ENCODE measurements at regions of chr12 and their contacts with region 1.

Region 1: DNA sequence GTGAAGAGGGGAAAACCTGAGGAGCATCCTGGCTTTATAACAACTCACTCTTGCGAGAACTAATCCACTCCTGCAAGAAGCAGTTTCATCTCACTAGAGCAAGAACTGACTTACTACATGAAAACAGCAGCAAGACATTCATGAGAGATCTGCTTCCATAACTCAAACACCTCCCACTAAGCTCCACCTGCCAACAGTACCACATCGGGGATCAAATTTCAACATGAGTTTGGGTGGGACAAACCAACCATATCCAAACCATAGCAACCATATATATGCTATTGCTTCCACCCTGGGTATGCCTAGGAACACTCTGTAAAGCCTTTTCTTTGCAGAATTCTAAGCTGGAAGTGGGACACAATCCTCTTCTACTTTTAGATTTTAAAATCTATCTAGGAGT is 13.9 kb upstream of the AVPR1A start:
- DNase-seq: no peak
- H3K4me3 ChIP-seq: no peak overlapping the region
- H3K27ac ChIP-seq: no peak overlapping the region
- H3K27me3 ChIP-seq: no peaks in the 10 kb centered on the region
- CTCF ChIP-seq: no peak

Region 2: DNA sequence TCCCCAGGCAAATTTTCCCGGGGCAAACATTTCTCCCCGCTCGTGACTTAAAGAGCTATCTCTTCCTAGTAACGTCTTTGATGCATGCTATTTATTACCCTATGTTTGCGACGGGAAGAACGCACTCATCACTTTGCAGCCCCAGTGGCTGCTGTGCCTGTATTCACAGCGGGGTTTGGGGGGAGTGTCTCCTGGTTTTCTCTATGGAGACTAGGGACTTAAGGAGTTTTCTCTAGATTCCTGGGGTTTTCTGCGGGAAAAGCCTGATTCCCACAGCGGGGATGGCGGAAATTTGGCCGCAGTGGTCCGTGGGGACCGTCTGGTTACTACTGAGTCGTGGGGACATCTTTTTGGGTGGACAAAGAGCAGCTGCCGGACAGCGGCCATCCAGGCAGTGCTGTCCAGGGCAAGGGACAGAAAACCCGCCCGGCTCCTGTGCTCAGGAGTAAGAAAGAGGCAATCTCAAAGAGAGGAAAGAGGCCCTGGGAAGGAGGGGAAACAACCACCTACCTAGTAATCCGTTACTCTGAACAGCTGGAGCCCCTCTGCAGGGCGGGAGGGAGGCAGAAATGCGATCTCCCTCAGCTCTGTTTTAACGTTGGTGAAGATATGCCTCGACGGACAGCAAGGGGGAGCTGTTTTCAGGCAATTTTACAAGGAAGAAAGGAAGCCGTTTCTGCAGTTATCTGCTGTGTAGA is 13.1 kb before region 1 on chr12:
- CTCF ChIA-PET with region 1: interaction called, 16 read pairs
- POLR2A ChIA-PET with region 1: no interaction called
- DNase-seq: peak; percentile 3
- H3K4me3 ChIP-seq: no peak overlapping the region
- H3K27ac ChIP-seq: no peak overlapping the region
- H3K27me3 ChIP-seq: peaks cover 25% of the 10 kb centered on the region
- CTCF ChIP-seq: peak; percentile 83

Region 3: GRCh38 chr12:63179224-63179623 is 14.3 kb after region 1 on chr12:
- CTCF ChIA-PET with region 1: no interaction called
- POLR2A ChIA-PET with region 1: no interaction called
- DNase-seq: no peak
- H3K4me3 ChIP-seq: no peak overlapping the region
- H3K27ac ChIP-seq: no peak overlapping the region
- H3K27me3 ChIP-seq: no peaks in the 10 kb centered on the region
- CTCF ChIP-seq: no peak

Region 4: DNA sequence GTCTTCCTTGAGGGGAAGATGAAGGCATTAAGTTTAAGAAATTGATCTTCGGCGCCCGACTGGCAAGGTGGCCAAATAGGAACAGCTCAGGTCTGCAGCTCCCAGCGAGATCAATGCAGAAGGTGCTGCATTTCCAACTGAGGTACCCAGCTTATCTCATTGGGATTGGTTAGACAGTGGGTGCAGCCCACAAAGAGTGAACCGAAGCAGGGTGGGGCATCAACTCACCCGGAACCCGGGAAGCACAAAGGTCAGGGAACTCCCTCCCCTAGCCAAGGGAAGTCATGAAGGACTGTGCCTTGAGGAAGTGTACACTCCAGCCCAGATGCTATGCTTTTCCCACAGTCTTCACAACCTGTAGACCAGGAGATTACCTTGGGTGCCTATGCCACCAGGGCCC is 31.3 kb after region 1 on chr12:
- CTCF ChIA-PET with region 1: no interaction called
- POLR2A ChIA-PET with region 1: no interaction called
- DNase-seq: no peak
- H3K4me3 ChIP-seq: no peak overlapping the region
- H3K27ac ChIP-seq: no peak overlapping the region
- H3K27me3 ChIP-seq: no peaks in the 10 kb centered on the region
- CTCF ChIP-seq: no peak

Region 5: DNA sequence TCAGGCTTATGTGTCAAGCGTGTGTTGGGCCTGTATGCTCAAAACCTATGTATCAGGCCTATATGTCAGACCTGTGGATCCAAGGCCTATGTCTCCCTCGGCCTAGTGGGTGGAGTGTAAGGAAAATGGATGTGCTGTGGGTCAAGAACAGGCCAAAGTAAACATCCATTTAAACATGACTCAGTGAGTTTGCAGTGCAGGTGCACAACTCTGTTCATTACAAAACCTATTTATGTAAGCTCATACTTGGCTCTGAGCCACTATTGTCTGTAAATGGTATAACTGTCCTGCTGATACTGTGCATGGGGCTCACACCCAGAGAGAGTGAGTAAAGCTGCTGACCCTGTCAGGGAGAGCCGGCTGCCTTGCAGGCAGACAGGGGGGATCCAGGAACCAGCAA is 235.8 kb after region 1 on chr12:
- CTCF ChIA-PET with region 1: no interaction called
- POLR2A ChIA-PET with region 1: no interaction called
- DNase-seq: no peak
- H3K4me3 ChIP-seq: no peak overlapping the region
- H3K27ac ChIP-seq: no peak overlapping the region
- H3K27me3 ChIP-seq: peaks cover 2% of the 10 kb centered on the region
- CTCF ChIP-seq: no peak

Measured in AG04450 (cell line).